A673 (cell line): ENCODE measurements at regions of chr7 and their contacts with region 1.

Region 1: DNA sequence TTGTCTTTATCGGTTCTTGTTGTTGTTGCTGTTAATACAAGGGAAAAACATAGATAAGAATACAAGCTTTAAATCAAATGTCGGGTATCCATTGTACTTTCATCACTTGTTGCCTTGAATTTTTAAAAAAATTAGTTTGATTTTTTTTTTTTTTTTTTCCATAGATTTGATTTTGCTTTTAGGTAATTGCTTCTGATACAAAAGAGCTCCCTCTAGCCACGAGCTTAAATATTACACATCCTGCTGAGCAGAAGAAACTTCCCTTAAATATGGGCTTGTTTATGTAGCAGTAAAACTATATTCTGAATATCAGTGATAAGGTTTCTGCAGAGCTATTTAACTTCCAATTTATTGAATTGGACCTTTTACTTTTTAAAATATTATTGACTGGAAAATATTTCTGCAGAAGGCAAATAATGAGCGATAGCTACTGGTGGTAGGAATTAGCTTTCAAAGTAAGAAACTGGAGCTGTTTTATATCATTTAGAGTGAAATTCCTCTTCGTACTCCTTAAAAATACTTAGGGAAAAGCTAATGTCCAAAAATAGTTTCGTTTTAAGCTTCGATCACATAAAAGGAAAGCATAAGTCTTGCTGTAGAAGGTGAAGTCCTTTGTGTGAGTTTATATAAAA is 216.9 kb downstream of the POLR1F start:
- DNase-seq: peak; percentile 37
- H3K4me3 ChIP-seq: no peak overlapping the region
- H3K27ac ChIP-seq: no peak overlapping the region
- H3K4me1 ChIP-seq: no peaks in the 10 kb centered on the region
- H3K27me3 ChIP-seq: no peaks in the 10 kb centered on the region
- CTCF ChIP-seq: peak; percentile 75

Region 2: GRCh38 chr7:19161671-19162070 is 330.3 kb before region 1 on chr7:
- CTCF ChIA-PET with region 1: interaction called, 13 read pairs
- POLR2A ChIA-PET with region 1: no interaction called
- intact Hi-C with region 1: no loop called
- DNase-seq: no peak
- H3K4me3 ChIP-seq: no peak overlapping the region
- H3K27ac ChIP-seq: no peak overlapping the region
- H3K4me1 ChIP-seq: no peaks in the 10 kb centered on the region
- H3K27me3 ChIP-seq: peaks cover 3% of the 10 kb centered on the region
- CTCF ChIP-seq: no peak

Region 3: GRCh38 chr7:19508124-19508523 is 16.2 kb after region 1 on chr7:
- CTCF ChIA-PET with region 1: interaction called, 10 read pairs
- POLR2A ChIA-PET with region 1: no interaction called
- intact Hi-C with region 1: no loop called
- DNase-seq: peak; percentile 25
- H3K4me3 ChIP-seq: no peak overlapping the region
- H3K27ac ChIP-seq: no peak overlapping the region
- H3K4me1 ChIP-seq: no peaks in the 10 kb centered on the region
- H3K27me3 ChIP-seq: no peaks in the 10 kb centered on the region
- CTCF ChIP-seq: no peak

Region 4: DNA sequence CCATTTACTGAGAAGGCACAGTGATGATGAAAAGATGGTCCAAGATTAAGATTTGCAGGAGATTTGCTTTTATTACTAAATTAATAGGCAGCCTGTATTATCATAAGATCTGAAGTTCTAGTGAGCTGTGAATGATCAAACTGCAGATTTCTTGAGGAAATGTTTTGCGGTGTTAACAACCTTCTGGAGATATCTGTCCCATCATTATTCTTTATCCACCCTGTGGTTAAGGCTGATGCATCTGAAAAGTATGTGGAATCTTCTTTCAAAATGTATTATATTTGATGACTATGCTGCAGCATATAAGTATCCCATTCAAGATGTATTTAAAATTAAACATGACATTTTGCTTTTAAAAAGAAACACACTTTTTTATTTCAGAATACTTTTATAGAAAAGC is 66.6 kb after region 1 on chr7:
- CTCF ChIA-PET with region 1: no interaction called
- POLR2A ChIA-PET with region 1: interaction called, 12 read pairs
- intact Hi-C with region 1: no loop called
- DNase-seq: no peak
- H3K4me3 ChIP-seq: no peak overlapping the region
- H3K27ac ChIP-seq: no peak overlapping the region
- H3K4me1 ChIP-seq: no peaks in the 10 kb centered on the region
- H3K27me3 ChIP-seq: peaks cover 47% of the 10 kb centered on the region
- CTCF ChIP-seq: no peak

Region 5: DNA sequence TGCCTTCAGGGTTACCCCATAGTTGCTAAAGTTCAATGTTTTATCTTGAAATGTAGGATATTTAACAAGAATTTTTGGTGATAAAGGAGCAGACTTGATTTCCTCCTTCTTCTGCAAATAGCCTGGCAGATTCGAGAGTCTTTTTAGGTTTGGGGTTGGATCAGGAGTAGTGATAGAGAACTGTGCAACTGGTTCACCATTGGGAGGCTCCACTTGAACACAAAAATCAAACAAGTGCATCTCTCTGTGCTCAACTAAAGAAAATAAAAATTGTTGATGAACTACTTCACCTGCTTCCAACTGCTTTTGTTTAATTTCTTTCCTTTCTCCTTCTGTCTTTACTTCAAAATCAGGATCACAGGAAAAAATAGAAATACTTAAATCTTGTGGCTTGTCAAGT is 666.7 kb after region 1 on chr7:
- CTCF ChIA-PET with region 1: no interaction called
- POLR2A ChIA-PET with region 1: no interaction called
- intact Hi-C with region 1: no loop called
- DNase-seq: peak; percentile 18
- H3K4me3 ChIP-seq: no peak overlapping the region
- H3K27ac ChIP-seq: no peak overlapping the region
- H3K4me1 ChIP-seq: no peaks in the 10 kb centered on the region
- H3K27me3 ChIP-seq: peaks cover 14% of the 10 kb centered on the region
- CTCF ChIP-seq: peak; percentile 40; the same call in 1 of the 2 replicates